Activated naive CD4-positive, alpha-beta T cell treated with anti-CD3 and anti-CD28 coated beads for 36 hours (primary cell): ENCODE measurements at regions of chr1 and their contacts with region 1.

Region 1: GRCh38 chr1:47351305-47351704 is 17.7 kb downstream of the CMPK1 start:
- DNase-seq: no peak
- H3K4me3 Mint-ChIP-seq: no peak overlapping the region
- H3K27ac Mint-ChIP-seq: peak overlapping the region; percentile 77
- H3K4me1 Mint-ChIP-seq: peaks cover 20% of the 10 kb centered on the region
- H3K27me3 Mint-ChIP-seq: no peaks in the 10 kb centered on the region

Region 2: GRCh38 chr1:47298025-47298699 is 53.1 kb before region 1 on chr1:
- CTCF ChIA-PET with region 1: no interaction called
- intact Hi-C with region 1: no loop called
- DNase-seq: no peak
- H3K4me3 Mint-ChIP-seq: no peak overlapping the region
- H3K27ac Mint-ChIP-seq: no peak overlapping the region
- H3K4me1 Mint-ChIP-seq: no peaks in the 10 kb centered on the region
- H3K27me3 Mint-ChIP-seq: no peaks in the 10 kb centered on the region

Region 3: DNA sequence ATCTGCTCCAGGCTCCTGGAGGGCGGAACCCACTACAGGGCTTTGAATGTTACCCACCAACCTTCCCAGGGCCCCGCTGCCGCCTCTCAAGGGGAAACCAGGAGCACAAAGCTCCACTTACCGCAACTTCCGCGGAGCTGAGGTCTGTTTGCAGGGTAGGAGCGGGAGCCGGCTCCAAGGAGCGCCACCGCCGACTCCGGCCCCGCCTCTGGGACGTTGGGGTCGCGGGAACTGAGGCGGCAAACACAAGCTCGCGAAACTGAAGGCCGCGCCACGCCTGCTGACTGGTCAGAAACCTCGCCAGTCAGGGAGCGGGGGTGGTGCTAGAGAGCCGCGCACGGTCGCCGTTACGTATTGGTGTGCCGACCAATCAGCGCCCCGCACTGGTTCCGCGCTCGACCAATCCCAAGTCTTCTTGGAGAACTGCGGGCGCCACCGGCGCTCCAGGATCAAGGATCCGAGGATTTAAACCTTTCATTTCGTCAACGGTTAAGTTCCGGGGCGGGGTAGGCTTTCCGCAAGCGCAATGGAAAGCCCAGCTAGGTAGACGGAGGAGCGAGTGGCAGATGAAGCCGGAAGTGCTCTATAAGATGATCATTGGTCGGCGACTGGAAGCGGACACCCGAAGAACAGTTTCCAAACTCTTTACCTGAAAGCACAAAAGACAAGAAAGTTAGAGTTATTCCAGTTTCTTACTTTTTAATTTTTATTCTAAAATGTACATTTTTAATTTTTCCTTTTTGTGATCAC is 37.2 kb before region 1 on chr1 and contains the start of gene STIL:
- CTCF ChIA-PET with region 1: no interaction called
- intact Hi-C with region 1: loop called (anchors 1 kb)
- DNase-seq: peak; percentile 99
- H3K4me3 Mint-ChIP-seq: peak within 1 kb of the TSS; percentile 96
- H3K27ac Mint-ChIP-seq: peak within 1 kb of the TSS; percentile 95
- H3K4me1 Mint-ChIP-seq: peaks cover 10% of the 10 kb centered on the region
- H3K27me3 Mint-ChIP-seq: no peaks in the 10 kb centered on the region
- total RNA-seq, gene STIL: 41.4 to 43.5 TPM

Region 4: GRCh38 chr1:47333922-47334764 is 17.2 kb before region 1 on chr1:
- CTCF ChIA-PET with region 1: no interaction called
- intact Hi-C with region 1: loop called (anchors 1 kb)
- DNase-seq: peak; percentile 75
- H3K4me3 Mint-ChIP-seq: peak overlapping the region; percentile 88
- H3K27ac Mint-ChIP-seq: peak overlapping the region; percentile 93
- H3K4me1 Mint-ChIP-seq: peaks cover 20% of the 10 kb centered on the region
- H3K27me3 Mint-ChIP-seq: no peaks in the 10 kb centered on the region